OCI-LY7 (cell line): ENCODE measurements at regions of chr11 and their contacts with region 1.

Region 1: GRCh38 chr11:61881397-61881796 is 9.9 kb downstream of the FADS3 start:
- DNase-seq: peak; percentile 84
- H3K4me3 ChIP-seq: peak overlapping the region; percentile 85
- H3K27ac ChIP-seq: peak overlapping the region; percentile 94
- H3K4me1 ChIP-seq: peaks cover 70% of the 10 kb centered on the region
- CTCF ChIP-seq: no peak

Region 2: DNA sequence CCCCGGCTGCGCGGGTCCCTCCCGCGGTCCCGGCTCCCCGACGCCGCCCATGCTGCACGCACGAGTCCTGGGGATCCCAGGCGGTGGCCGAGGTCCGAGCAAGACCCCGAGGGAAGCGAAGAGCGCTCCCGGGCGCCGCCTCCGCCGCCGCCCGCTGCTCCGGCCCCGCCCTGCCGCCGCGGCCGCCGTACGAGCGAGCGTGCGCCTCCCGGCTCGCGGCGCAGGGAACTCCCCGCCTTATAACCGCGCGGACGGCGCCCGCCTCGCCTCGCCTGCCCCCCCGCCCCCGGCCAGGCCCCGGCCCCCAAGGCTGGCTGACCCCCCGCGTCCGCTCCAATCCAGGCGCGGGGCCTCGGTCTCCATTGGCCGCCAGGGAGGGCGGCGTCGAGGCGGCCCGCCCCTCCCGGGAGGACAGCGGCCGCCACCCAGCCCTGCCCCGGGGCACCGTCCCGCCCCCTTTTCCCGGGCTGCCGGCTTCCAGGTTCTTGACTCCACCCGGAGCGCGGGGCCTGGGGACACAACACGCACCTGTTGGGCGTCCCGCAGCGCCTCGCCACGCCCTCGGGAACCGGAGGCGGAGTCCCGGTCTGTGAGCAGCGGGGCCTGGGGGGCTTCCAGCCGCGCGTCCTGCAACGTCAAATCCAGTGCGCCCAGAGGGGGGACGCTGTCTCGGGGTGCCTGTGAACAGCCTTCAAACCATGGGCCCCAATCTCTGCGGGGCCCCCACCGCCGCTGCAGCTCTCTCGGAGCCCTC is 10.1 kb after region 1 on chr11 and contains the start of gene FADS3:
- CTCF ChIA-PET with region 1: interaction called, 3 read pairs
- POLR2A ChIA-PET with region 1: interaction called, 10 read pairs
- intact Hi-C with region 1: loop called (anchors 1 kb)
- DNase-seq: peak; percentile 88
- H3K4me3 ChIP-seq: peak within 1 kb of the TSS; percentile 93
- H3K27ac ChIP-seq: peak within 1 kb of the TSS; percentile 77
- H3K4me1 ChIP-seq: peaks cover 30% of the 10 kb centered on the region
- CTCF ChIP-seq: peak; percentile 42; the same call in 1 of the 2 replicates
- total RNA-seq, gene FADS3: 168 and 191 TPM in 2 replicates

Region 3: GRCh38 chr11:62411524-62411923 is 530.1 kb after region 1 on chr11:
- CTCF ChIA-PET with region 1: no interaction called
- POLR2A ChIA-PET with region 1: no interaction called
- intact Hi-C with region 1: no loop called
- DNase-seq: no peak
- H3K4me3 ChIP-seq: no peak overlapping the region
- H3K27ac ChIP-seq: no peak overlapping the region
- H3K4me1 ChIP-seq: no peaks in the 10 kb centered on the region
- CTCF ChIP-seq: no peak